Lower leg skin (tissue), 4 donors: ENCODE measurements at regions of chr3 and their contacts with region 1.

Region 1: GRCh38 chr3:17238032-17238431 is 353.3 kb downstream of the PLCL2 start:
- DNase-seq: no peak
- H3K4me3 ChIP-seq: no peak overlapping the region
- CTCF ChIP-seq: no peak
- POLR2A ChIP-seq: no peak

Region 2: GRCh38 chr3:16600780-16601539 is 637.1 kb before region 1 on chr3:
- intact Hi-C with region 1: loop called (anchors 5 kb)
- DNase-seq: peak; percentile 78 to 95
- H3K4me3 ChIP-seq: no peak overlapping the region
- CTCF ChIP-seq: no peak
- POLR2A ChIP-seq: no peak

Region 3: DNA sequence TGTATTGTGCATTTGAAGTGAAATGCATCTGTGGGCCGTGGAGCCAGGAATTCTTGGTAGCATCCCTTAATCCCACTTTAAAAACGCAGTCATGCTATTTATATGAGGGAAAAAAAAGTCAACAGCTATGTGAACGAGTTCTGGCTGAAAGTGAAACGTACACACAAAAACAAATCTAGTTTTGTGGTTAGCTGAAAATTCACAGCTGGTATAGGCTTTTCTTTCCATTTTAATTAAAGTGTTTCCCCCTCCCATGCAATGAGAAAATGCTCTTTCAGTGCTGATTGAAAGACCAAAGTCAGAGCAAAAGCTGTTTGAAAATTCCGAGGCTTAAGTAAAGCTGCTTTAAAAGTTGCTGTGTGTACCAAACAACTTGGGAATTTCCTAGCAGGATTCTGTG is 55.9 kb before region 1 on chr3:
- intact Hi-C with region 1: no loop called
- DNase-seq: no peak
- H3K4me3 ChIP-seq: no peak overlapping the region
- CTCF ChIP-seq: no peak
- POLR2A ChIP-seq: no peak